Right cardiac atrium (tissue), 5 donors: ENCODE measurements at regions of chr20 and their contacts with region 1.

Region 1: GRCh38 chr20:8156235-8157079 is 24.4 kb downstream of the PLCB1 start:
- DNase-seq: no peak
- ATAC-seq: peak in 1 of 2 donors; percentile 52
- H3K4me3 ChIP-seq: no peak overlapping the region
- H3K27ac ChIP-seq: no peak overlapping the region
- H3K4me1 ChIP-seq: peaks cover 9% of the 10 kb centered on the region
- H3K27me3 ChIP-seq: no peaks in the 10 kb centered on the region

Region 2: DNA sequence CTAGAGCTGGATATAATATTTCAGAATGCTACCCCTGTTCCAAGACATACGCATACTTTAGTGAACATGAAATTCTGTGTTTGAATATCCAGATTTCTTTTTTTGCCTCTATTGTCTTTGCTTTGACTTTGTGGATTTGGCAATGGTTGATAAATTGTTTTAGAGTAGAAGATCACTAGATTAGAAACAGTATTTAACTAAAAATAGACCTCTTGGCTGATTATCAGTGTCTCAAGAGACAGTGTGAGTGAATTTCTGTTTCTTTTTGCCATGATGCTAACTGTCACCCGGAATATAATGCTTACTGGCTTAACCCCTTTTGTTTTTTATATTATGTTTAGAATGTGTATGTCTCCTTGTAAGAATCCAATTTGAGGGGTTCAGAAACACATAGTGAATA is 78.1 kb after region 1 on chr20:
- intact Hi-C with region 1: no loop called
- DNase-seq: no peak
- ATAC-seq: peak in 1 of 2 donors; percentile 43
- H3K4me3 ChIP-seq: no peak overlapping the region
- H3K27ac ChIP-seq: no peak overlapping the region
- H3K4me1 ChIP-seq: peaks cover 8% of the 10 kb centered on the region
- H3K27me3 ChIP-seq: no peaks in the 10 kb centered on the region

Region 3: DNA sequence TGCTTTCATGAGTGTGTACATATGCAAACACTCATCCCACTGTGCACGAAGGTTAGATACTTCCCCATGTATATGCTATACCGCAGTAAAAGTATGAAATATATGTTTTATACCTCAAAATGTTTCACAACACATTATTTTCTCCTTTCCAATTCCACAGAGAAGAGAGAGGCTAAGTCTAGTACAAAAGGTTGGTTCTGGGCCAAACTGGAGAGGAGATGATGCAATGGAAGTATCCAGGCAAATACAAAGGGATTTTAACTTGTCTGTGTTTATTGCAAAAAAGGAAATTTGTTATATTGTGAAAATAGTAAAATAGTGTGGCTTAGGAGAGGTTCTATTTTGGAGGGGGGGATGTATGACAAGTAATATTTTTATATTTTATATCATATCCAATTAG is 88.2 kb after region 1 on chr20:
- intact Hi-C with region 1: loop called in 1 of 4 experiments (anchors 10 kb)
- DNase-seq: no peak
- ATAC-seq: peak; percentile 82 to 85
- H3K4me3 ChIP-seq: no peak overlapping the region
- H3K27ac ChIP-seq: no peak overlapping the region
- H3K4me1 ChIP-seq: peaks cover 2% of the 10 kb centered on the region
- H3K27me3 ChIP-seq: no peaks in the 10 kb centered on the region